ENCODE measurements at regions of chr3 and their contacts with region 1.

Region 1: GRCh38 chr3:119240591-119241434 is at the start of gene B4GALT4:
- DNase-seq: peak; percentile 71 to 87 (median 77)
- ATAC-seq: peak; percentile 98
- H3K4me3 ChIP-seq: peak within 1 kb of the TSS; percentile 67
- H3K27ac ChIP-seq: peak within 1 kb of the TSS; percentile 74
- H3K4me1 ChIP-seq: peaks cover 8 to 13% of the 10 kb centered on the region in 2 experiments; a peak in 4 of 5 replicates
- H3K27me3 ChIP-seq: no peaks in the 10 kb centered on the region
- CTCF ChIP-seq: no peak
- EP300 ChIP-seq: no peak
- POLR2A ChIP-seq: peak; percentile 78
- RAD21 ChIP-seq: no peak
- polyA plus RNA-seq, gene B4GALT4: 14.9 to 17.8 TPM

Region 2: GRCh38 chr3:119145500-119146191 is 95.2 kb before region 1 on chr3 and contains the start of gene TEX55:
- CTCF ChIA-PET with region 1: no interaction called
- POLR2A ChIA-PET with region 1: no interaction called
- in situ Hi-C with region 1: no loop called
- intact Hi-C with region 1: loop called (anchors 1 kb)
- DNase-seq: peak in 3 of 4 experiments; percentile 10 to 44 (median 36)
- ATAC-seq: peak; percentile 89
- H3K4me3 ChIP-seq: no peak within 1 kb of the TSS
- H3K27ac ChIP-seq: no peak within 1 kb of the TSS
- H3K4me1 ChIP-seq: peaks cover 0 to 6% of the 10 kb centered on the region in 2 experiments; a peak in 2 of 5 replicates
- H3K27me3 ChIP-seq: no peaks in the 10 kb centered on the region
- CTCF ChIP-seq: peak; percentile 51 to 66 (median 60)
- EP300 ChIP-seq: no peak
- POLR2A ChIP-seq: no peak
- RAD21 ChIP-seq: peak; percentile 48 to 77
- polyA plus RNA-seq, gene TEX55: not detected

Region 3: GRCh38 chr3:119352849-119353502 is 112.2 kb after region 1 on chr3:
- CTCF ChIA-PET with region 1: no interaction called
- POLR2A ChIA-PET with region 1: no interaction called
- in situ Hi-C with region 1: no loop called
- intact Hi-C with region 1: no loop called
- DNase-seq: peak in 1 of 4 experiments; percentile 41
- ATAC-seq: peak; percentile 89
- H3K4me3 ChIP-seq: no peak overlapping the region
- H3K27ac ChIP-seq: no peak overlapping the region
- H3K4me1 ChIP-seq: peaks cover 0 to 7% of the 10 kb centered on the region in 2 experiments; a peak in 4 of 5 replicates
- H3K27me3 ChIP-seq: no peaks in the 10 kb centered on the region; a peak in 1 of 5 replicates
- CTCF ChIP-seq: peak; percentile 28 to 51 (median 30); a peak in 4 of 6 replicates
- EP300 ChIP-seq: no peak
- POLR2A ChIP-seq: no peak
- RAD21 ChIP-seq: peak; percentile 34 to 68; a peak in 3 of 4 replicates

Region 4: DNA sequence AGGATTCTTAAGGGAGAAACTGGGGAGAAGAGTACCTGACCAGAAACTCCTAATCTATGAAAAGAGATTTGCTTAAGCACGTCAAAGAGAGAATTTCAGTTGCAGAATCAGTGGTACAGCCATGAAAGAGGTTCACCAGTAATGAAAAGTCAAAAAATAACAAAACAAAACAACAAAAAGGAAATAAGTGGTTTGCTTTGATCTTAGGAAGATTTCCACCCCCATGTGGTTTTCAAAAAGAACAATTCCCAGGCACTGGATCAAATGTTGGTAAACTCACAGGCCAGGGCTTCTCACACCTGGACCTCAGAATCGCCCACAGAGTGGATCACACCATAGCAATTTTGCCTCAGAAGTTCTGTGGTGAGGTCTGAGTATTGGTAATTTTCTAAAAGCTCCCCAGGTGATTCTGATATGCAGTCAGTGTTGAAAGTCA is 155.1 kb after region 1 on chr3:
- CTCF ChIA-PET with region 1: no interaction called
- POLR2A ChIA-PET with region 1: no interaction called
- in situ Hi-C with region 1: no loop called
- intact Hi-C with region 1: no loop called
- DNase-seq: no peak
- ATAC-seq: no peak
- H3K4me3 ChIP-seq: no peak overlapping the region
- H3K27ac ChIP-seq: no peak overlapping the region
- H3K4me1 ChIP-seq: no peaks in the 10 kb centered on the region
- H3K27me3 ChIP-seq: 0 out of 5 replicates have a peak, but pooled peaks cover 0 to 6% of the 10 kb centered on the region in 2 experiments
- CTCF ChIP-seq: no peak
- EP300 ChIP-seq: no peak
- POLR2A ChIP-seq: no peak
- RAD21 ChIP-seq: no peak

Measured in K562 (cell line).